CD4-positive, alpha-beta T cell (primary cell): ENCODE measurements at regions of chr19 and their contacts with region 1.

Region 1: GRCh38 chr19:31262725-31263191 is 86.5 kb downstream of the TSHZ3 start:
- DNase-seq: no peak
- ATAC-seq: no peak
- H3K4me3 ChIP-seq: no peak overlapping the region
- H3K4me3 Mint-ChIP-seq: no peak overlapping the region
- H3K27ac ChIP-seq: no peak overlapping the region
- H3K27ac Mint-ChIP-seq: no peak overlapping the region
- H3K4me1 ChIP-seq: peaks cover 4% of the 10 kb centered on the region
- H3K4me1 Mint-ChIP-seq: peaks cover 9% of the 10 kb centered on the region
- H3K27me3 ChIP-seq: peaks cover 10 to 13% of the 10 kb centered on the region in 2 experiments
- H3K27me3 Mint-ChIP-seq: peaks cover 32% of the 10 kb centered on the region
- CTCF ChIP-seq: no peak

Region 2: DNA sequence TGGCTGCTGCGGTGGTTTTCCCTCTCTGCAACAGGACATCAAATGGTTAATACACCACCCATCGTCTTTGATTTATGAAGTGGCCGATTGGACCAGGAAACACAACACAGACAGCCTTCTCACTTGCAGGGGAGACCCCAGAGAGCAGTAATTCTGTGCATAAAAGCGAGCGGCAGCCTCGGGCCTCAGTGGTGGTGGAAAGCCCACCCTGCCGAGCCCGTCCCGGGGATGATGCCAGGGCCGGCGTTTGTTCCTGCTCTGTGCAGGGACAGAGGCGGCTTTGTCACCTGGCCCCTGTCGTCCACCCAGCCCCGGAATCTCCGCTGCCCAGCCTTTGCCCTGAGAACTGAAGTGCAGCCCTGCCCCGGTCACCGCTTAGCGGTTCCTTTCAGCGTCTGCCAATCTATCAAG is 98.0 kb before region 1 on chr19:
- CTCF ChIA-PET with region 1: no interaction called
- POLR2A ChIA-PET with region 1: no interaction called
- intact Hi-C with region 1: loop called in 1 of 2 experiments (anchors 5 kb)
- DNase-seq: no peak
- ATAC-seq: no peak
- H3K4me3 ChIP-seq: no peak overlapping the region
- H3K4me3 Mint-ChIP-seq: no peak overlapping the region
- H3K27ac ChIP-seq: no peak overlapping the region
- H3K27ac Mint-ChIP-seq: no peak overlapping the region
- H3K4me1 ChIP-seq: no peaks in the 10 kb centered on the region
- H3K4me1 Mint-ChIP-seq: no peaks in the 10 kb centered on the region
- H3K27me3 ChIP-seq: peaks cover 0 to 17% of the 10 kb centered on the region in 2 experiments
- H3K27me3 Mint-ChIP-seq: peaks cover 38% of the 10 kb centered on the region
- CTCF ChIP-seq: no peak